B cell (primary cell): ENCODE measurements at regions of chr2 and their contacts with region 1.

Region 1: DNA sequence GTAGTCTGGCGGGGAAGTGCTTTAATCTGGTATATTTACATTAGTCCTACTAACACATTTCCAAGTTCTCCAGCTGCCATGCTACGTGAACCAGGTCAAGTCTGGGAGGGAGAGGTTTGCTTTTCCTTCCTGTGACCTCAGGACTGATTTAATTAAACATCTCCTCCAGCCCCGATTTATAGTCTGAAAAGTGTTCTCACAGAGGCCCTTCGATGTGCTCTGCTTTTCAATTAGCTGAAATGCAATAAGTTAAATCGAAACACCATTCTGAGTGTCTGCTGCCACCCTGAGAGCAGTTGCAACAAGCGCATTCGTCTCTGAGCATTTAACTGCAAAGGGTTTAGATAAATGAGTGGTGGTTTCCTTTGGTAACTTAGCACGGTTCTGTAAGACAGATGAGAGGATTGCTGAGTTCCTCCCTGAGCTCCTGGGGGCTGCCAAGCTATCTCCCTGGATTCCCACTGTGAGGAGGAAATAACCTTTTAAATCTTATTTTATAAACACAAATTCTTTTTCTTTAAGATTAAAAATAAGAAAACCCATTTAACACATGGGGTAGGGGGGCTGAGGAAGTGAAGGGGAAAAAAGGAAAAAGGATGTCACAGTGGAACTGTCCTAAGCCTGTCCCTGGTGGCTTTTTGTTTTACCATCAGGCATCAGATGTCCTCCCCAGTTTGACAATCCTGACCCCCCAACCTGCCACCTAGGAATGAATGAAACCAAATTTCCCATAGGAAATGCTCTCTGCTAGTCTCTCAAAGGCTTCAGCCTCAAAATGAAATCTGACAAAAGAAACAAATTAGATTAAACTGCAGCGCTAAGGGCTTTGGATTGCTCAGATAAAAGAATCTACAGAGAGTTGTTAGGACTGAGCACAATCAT is 56.5 kb upstream of the CREB1 start:
- DNase-seq: peak; percentile 28
- ATAC-seq: no peak
- H3K4me3 ChIP-seq: no peak overlapping the region
- H3K4me3 Mint-ChIP-seq: no peak overlapping the region
- H3K27ac ChIP-seq: no peak overlapping the region
- H3K27ac Mint-ChIP-seq: no peak overlapping the region
- H3K4me1 ChIP-seq: peaks cover 3 to 5% of the 10 kb centered on the region in 2 donors
- H3K4me1 Mint-ChIP-seq: peaks cover 7% of the 10 kb centered on the region
- H3K27me3 ChIP-seq: no peaks in the 10 kb centered on the region
- H3K27me3 Mint-ChIP-seq: no peaks in the 10 kb centered on the region
- CTCF ChIP-seq: no peak

Region 2: DNA sequence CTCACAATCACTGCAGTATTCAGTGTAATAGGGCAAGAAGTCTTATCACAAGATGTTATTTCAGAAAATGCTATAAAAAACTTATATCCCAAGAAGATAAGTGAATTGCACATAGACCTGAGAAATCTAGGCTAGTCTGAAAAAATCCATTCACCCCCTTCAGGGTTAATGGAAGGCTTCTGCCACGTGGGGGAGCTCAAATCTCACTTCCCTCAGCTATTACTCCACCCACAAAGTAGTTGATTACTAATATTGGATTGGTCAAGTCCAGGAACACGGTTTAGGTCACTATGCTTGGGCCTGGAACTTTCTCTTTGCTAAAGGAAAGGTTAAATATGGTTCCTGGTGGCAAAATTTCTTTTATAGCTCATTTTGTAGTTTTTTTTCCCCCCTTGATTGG is 1081.2 kb before region 1 on chr2:
- CTCF ChIA-PET with region 1: no interaction called
- POLR2A ChIA-PET with region 1: no interaction called
- intact Hi-C with region 1: loop called (anchors 5 kb)
- DNase-seq: peak; percentile 21
- ATAC-seq: no peak
- H3K4me3 ChIP-seq: no peak overlapping the region
- H3K4me3 Mint-ChIP-seq: no peak overlapping the region
- H3K27ac ChIP-seq: no peak overlapping the region
- H3K27ac Mint-ChIP-seq: no peak overlapping the region
- H3K4me1 ChIP-seq: no peaks in the 10 kb centered on the region
- H3K4me1 Mint-ChIP-seq: no peaks in the 10 kb centered on the region
- H3K27me3 ChIP-seq: no peaks in the 10 kb centered on the region
- H3K27me3 Mint-ChIP-seq: no peaks in the 10 kb centered on the region
- CTCF ChIP-seq: peak; percentile 39

Region 3: DNA sequence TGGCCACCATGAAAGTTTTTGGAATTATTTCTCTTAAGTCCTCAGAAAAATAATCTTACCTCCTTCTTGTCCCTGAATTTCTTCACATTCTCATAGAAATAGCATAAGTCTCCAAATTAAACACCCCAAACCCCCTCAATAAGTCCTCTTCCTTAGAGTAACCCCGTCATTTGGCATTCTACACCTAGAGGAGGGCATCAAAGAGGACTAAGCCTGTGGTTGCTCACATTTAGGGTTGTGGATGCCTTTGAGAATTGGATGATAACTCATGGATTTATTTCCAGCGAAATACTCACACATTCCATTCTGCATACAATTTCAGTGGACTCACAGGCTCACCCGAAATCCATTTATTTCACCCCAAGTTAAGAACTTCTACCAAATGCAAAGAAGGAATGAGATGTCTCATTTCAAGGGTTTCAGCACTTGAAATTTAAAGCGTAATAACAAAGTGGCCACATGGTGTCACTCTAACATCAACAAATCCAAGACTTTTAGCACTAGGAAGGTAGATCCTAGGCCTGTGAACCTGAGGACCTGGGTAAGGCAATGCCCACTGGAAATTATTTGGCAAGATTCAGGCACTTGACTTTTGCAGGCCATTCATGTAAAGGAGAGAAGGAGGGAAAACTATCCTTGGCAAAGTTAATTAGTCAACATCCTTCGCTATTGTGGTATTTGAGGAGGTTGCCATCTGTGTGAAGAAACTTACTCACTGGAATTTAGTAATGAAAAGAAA is 779.7 kb before region 1 on chr2:
- CTCF ChIA-PET with region 1: interaction called, 10 read pairs
- POLR2A ChIA-PET with region 1: no interaction called
- intact Hi-C with region 1: loop called (anchors 1 kb)
- DNase-seq: peak; percentile 70
- ATAC-seq: peak; percentile 36
- H3K4me3 ChIP-seq: no peak overlapping the region
- H3K4me3 Mint-ChIP-seq: no peak overlapping the region
- H3K27ac ChIP-seq: no peak overlapping the region
- H3K27ac Mint-ChIP-seq: no peak overlapping the region
- H3K4me1 ChIP-seq: no peaks in the 10 kb centered on the region
- H3K4me1 Mint-ChIP-seq: no peaks in the 10 kb centered on the region
- H3K27me3 ChIP-seq: no peaks in the 10 kb centered on the region
- H3K27me3 Mint-ChIP-seq: peaks cover 17% of the 10 kb centered on the region
- CTCF ChIP-seq: peak; percentile 80

Region 4: DNA sequence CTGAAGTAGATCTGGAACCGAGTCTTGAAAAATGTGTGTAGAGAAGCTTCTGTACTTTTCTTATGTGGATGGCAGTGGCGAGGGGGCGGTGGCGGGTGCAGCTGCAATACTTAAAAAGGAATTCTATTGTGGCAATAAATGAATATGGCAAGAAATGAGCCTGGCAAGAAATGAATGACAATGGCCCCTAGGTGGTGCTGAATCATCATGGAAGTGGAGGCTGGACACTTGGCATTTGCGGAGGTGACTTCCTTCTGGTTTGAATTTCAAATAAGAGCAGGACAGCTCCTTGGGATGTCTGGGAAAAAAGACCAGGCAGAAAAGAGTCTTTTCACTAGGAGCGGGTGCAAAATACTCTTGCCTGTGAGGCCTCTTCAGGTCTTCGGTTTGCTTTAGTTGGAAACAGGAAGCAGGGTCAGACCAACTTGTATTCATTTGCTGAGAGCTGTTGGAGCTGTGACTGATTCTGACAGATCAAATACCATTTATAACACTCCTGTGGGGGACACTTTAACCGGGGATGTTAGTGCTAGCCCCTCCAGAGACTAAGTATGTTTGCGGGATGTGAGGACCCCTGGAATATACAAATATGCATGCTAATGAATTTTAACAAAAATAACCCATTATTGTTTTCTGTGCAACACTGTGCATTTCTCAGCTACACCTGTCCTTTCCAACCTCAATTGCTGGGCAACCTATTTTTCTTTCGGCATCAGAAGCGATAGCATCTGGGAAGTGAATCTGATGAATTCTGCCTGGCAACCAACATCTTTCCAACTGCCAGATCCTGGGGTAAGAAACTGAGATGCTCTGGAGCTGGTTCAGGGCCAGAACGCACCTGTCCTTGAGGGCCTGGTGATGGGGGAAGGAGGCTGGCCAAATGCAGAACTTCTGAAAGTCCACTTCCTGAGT is 672.5 kb before region 1 on chr2:
- CTCF ChIA-PET with region 1: interaction called, 44 read pairs
- POLR2A ChIA-PET with region 1: no interaction called
- intact Hi-C with region 1: no loop called
- DNase-seq: peak; percentile 71
- ATAC-seq: peak; percentile 36
- H3K4me3 ChIP-seq: peak overlapping the region in 3 of 5 experiments; percentile 36 to 49 (median 45)
- H3K4me3 Mint-ChIP-seq: peak overlapping the region; percentile 80
- H3K27ac ChIP-seq: no peak overlapping the region
- H3K27ac Mint-ChIP-seq: no peak overlapping the region
- H3K4me1 ChIP-seq: peaks cover 0 to 5% of the 10 kb centered on the region in 2 donors
- H3K4me1 Mint-ChIP-seq: peaks cover 11% of the 10 kb centered on the region
- H3K27me3 ChIP-seq: no peaks in the 10 kb centered on the region
- H3K27me3 Mint-ChIP-seq: no peaks in the 10 kb centered on the region
- CTCF ChIP-seq: peak; percentile 78

Region 5: DNA sequence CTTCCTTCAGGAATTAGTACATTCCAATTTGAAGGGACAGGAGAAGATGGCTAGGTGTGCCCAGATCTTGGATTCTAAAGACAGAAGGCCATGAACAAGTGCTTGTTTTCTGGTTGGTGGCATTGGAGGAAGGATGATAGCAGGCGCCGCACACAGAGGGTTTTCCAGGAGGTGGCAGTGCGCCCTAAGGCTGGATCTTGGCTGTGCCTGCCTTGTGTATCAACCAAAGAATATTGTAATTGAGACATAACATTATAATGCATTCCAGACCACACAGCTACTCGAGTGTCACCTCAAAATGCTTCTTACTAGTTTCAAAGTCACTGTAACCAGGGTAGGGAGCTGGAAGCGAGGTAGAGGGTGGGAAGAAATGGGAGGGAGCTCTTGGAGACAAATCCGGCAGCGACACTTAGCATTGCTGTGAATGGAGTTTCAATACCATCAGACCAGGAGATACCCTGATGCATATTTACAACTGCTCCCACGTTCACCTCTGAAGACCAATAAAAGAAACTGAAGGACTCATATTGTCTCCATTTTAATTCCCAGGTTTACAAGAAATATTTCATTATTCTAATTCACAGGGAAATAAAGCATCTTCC is 491.4 kb before region 1 on chr2:
- CTCF ChIA-PET with region 1: interaction called, 30 read pairs
- POLR2A ChIA-PET with region 1: no interaction called
- intact Hi-C with region 1: loop called (anchors 1 kb)
- DNase-seq: peak; percentile 59
- ATAC-seq: peak; percentile 49
- H3K4me3 ChIP-seq: no peak overlapping the region
- H3K4me3 Mint-ChIP-seq: no peak overlapping the region
- H3K27ac ChIP-seq: no peak overlapping the region
- H3K27ac Mint-ChIP-seq: no peak overlapping the region
- H3K4me1 ChIP-seq: no peaks in the 10 kb centered on the region
- H3K4me1 Mint-ChIP-seq: no peaks in the 10 kb centered on the region
- H3K27me3 ChIP-seq: peaks cover 0 to 3% (median 0%) of the 10 kb centered on the region in 4 experiments
- H3K27me3 Mint-ChIP-seq: peaks cover 28% of the 10 kb centered on the region
- CTCF ChIP-seq: peak; percentile 64

Region 6: DNA sequence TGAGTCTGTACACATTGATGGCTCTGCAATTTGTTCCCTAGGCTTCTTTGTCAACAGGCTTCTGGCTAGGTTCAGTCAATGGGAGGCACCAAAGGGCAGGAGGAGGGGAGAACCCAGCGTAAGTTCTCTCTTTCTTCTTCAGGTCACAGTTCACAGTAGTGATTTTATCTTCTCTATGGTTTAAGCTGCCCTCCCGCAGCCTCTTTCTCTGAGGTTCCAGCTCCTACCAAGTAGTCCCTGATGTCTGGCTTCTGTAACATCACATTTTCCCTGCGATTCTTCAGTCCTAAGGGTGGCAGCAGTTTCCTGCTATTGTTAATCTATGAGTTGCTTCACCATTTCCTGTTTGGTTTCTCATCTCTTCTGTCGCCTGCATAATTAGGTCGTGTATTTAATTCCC is 426.6 kb before region 1 on chr2:
- CTCF ChIA-PET with region 1: interaction called, 12 read pairs
- POLR2A ChIA-PET with region 1: no interaction called
- intact Hi-C with region 1: loop called (anchors 1 kb)
- DNase-seq: peak; percentile 59
- ATAC-seq: peak; percentile 57
- H3K4me3 ChIP-seq: no peak overlapping the region
- H3K4me3 Mint-ChIP-seq: no peak overlapping the region
- H3K27ac ChIP-seq: no peak overlapping the region
- H3K27ac Mint-ChIP-seq: no peak overlapping the region
- H3K4me1 ChIP-seq: peaks cover 6% of the 10 kb centered on the region in 2 donors
- H3K4me1 Mint-ChIP-seq: peaks cover 6% of the 10 kb centered on the region
- H3K27me3 ChIP-seq: peaks cover 0 to 4% (median 0%) of the 10 kb centered on the region in 4 experiments
- H3K27me3 Mint-ChIP-seq: peaks cover 4% of the 10 kb centered on the region
- CTCF ChIP-seq: no peak

Region 7: GRCh38 chr2:207143215-207144172 is 329.8 kb before region 1 on chr2:
- CTCF ChIA-PET with region 1: interaction called, 18 read pairs
- POLR2A ChIA-PET with region 1: no interaction called
- intact Hi-C with region 1: loop called (anchors 1 kb)
- DNase-seq: peak; percentile 86
- ATAC-seq: peak; percentile 77
- H3K4me3 ChIP-seq: peak overlapping the region; percentile 43 to 71 (median 56)
- H3K4me3 Mint-ChIP-seq: peak overlapping the region; percentile 89
- H3K27ac ChIP-seq: peak overlapping the region; percentile 93 to 99
- H3K27ac Mint-ChIP-seq: peak overlapping the region; percentile 94
- H3K4me1 ChIP-seq: peaks cover 57 to 62% of the 10 kb centered on the region in 2 donors
- H3K4me1 Mint-ChIP-seq: peaks cover 68% of the 10 kb centered on the region
- H3K27me3 ChIP-seq: no peaks in the 10 kb centered on the region
- H3K27me3 Mint-ChIP-seq: no peaks in the 10 kb centered on the region
- CTCF ChIP-seq: no peak

Region 8: GRCh38 chr2:207513551-207514257 is 40.4 kb after region 1 on chr2:
- CTCF ChIA-PET with region 1: no interaction called
- POLR2A ChIA-PET with region 1: no interaction called
- intact Hi-C with region 1: no loop called
- DNase-seq: no peak
- ATAC-seq: no peak
- H3K4me3 ChIP-seq: no peak overlapping the region
- H3K4me3 Mint-ChIP-seq: no peak overlapping the region
- H3K27ac ChIP-seq: no peak overlapping the region
- H3K27ac Mint-ChIP-seq: no peak overlapping the region
- H3K4me1 ChIP-seq: no peaks in the 10 kb centered on the region
- H3K4me1 Mint-ChIP-seq: no peaks in the 10 kb centered on the region
- H3K27me3 ChIP-seq: no peaks in the 10 kb centered on the region
- H3K27me3 Mint-ChIP-seq: no peaks in the 10 kb centered on the region
- CTCF ChIP-seq: no peak

Region 9: GRCh38 chr2:207845202-207845864 is 372.0 kb after region 1 on chr2:
- CTCF ChIA-PET with region 1: no interaction called
- POLR2A ChIA-PET with region 1: no interaction called
- intact Hi-C with region 1: no loop called
- DNase-seq: no peak
- ATAC-seq: no peak
- H3K4me3 ChIP-seq: no peak overlapping the region
- H3K4me3 Mint-ChIP-seq: no peak overlapping the region
- H3K27ac ChIP-seq: no peak overlapping the region
- H3K27ac Mint-ChIP-seq: no peak overlapping the region
- H3K4me1 ChIP-seq: no peaks in the 10 kb centered on the region
- H3K4me1 Mint-ChIP-seq: peaks cover 5% of the 10 kb centered on the region
- H3K27me3 ChIP-seq: no peaks in the 10 kb centered on the region
- H3K27me3 Mint-ChIP-seq: no peaks in the 10 kb centered on the region
- CTCF ChIP-seq: no peak